ENCODE measurements at regions of chr11 and their contacts with region 1.

Region 1: DNA sequence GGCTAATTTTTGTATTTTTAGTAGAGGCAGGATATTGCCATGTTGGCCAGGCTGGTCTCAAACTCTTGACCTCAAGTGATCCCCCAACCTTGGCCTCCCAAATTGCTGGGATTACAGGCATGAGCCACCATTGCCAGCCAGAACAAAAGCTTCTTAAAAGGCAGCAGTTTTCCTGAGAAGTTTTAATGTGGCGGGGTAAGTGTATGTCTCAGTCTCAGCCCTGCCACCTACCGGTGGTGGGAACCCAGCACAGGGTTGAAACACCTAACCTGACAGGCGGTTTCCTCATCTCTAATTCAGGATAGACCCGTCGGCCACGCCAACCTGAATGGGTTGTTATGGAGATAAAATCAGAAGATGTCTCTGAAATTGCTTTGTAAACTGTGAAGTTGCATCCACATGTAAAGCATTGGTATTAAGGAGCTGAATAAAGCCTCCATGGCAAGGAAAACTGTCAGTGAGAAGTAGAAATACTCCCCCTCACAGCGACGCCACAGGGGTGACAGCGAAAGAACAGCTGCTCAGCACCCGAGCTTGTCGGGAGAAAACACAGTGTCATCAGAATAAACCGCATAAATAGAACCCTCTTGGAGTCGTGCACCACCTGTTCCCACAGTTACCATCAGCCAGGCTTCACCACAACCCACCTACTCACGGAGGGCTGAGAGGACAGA is 165.9 kb upstream of the NCAM1 start:
- DNase-seq: peak; percentile 31
- H3K4me3 ChIP-seq: no peak overlapping the region
- H3K27ac ChIP-seq: no peak overlapping the region
- H3K4me1 ChIP-seq: no peaks in the 10 kb centered on the region
- CTCF ChIP-seq: peak; percentile 67

Region 2: GRCh38 chr11:112289588-112290492 is 505.4 kb before region 1 on chr11:
- CTCF ChIA-PET with region 1: no interaction called
- POLR2A ChIA-PET with region 1: no interaction called
- intact Hi-C with region 1: loop called (anchors 5 kb)
- DNase-seq: peak; percentile 64
- H3K4me3 ChIP-seq: peak overlapping the region; percentile 49
- H3K27ac ChIP-seq: no peak overlapping the region
- H3K4me1 ChIP-seq: peaks cover 5% of the 10 kb centered on the region
- CTCF ChIP-seq: peak; percentile 83

Region 3: DNA sequence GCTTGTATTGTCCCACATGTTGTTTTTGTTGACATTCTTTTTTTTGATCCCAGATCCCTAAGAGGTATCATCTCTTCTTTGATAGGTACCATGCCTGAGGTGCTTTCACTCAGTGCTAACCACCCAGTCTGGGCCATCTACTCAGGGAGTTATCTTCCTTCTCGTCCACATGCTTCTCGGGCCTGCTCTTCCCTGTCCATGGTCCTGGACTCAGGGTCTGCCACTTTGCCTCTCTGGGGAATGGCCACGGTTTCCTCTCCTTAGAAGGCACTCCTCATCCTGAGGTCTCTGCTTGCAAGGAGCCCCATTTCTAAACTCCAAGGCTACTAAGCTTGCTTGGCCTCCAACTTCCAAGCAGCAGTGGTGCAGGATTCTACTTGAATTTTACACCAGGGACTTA is 61.1 kb before region 1 on chr11:
- CTCF ChIA-PET with region 1: no interaction called
- POLR2A ChIA-PET with region 1: no interaction called
- intact Hi-C with region 1: no loop called
- DNase-seq: no peak
- H3K4me3 ChIP-seq: no peak overlapping the region
- H3K27ac ChIP-seq: no peak overlapping the region
- H3K4me1 ChIP-seq: no peaks in the 10 kb centered on the region
- CTCF ChIP-seq: no peak